ENCODE measurements at regions of chr9 and their contacts with region 1.

Region 1: DNA sequence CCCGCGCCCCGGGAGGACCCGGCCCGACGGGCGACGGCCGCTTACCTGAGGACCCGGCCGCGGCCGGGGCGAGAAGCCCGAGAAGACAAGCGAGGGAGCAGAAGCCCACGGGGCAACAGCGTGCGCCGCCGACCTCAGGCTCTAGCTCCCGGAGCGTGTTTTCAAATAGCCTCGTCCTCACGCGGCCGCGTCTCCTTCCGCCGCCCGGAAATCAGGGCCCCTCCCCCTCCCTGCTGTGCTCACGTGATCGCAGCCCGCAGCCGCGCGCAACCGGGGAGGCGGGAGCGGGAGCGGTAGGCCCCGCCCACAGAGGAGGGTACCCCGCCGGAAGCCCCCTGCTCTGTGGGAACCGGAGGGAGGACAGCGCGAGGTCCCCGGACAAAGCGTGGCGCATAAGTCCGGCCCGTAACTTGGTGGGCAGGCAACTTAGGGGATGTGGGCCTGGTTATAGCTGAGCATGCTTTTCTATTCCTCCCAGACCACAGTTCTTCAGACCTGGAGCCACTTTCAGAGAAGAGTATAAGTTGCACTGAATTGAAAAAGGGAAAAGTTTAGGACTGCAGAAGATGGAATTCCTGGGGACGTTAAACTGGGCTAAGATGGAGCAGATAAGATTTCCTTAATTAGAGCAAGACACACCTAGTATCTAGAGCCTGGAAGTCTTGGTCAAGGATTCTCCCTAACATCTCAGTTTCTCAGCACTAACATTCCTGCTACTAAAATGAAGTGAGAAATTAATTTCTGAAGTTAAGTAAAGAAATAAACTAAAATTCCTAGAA is at the start of gene TEX10:
- DNase-seq: peak; percentile 97
- H3K4me3 Mint-ChIP-seq: peak within 1 kb of the TSS; percentile 88
- H3K27ac Mint-ChIP-seq: peak within 1 kb of the TSS; percentile 56
- H3K4me1 Mint-ChIP-seq: peaks cover 32% of the 10 kb centered on the region
- H3K27me3 Mint-ChIP-seq: no peaks in the 10 kb centered on the region
- total RNA-seq, gene TEX10: 31.3 and 32.8 TPM in 2 replicates

Region 2: GRCh38 chr9:99221621-99222415 is 1131.1 kb before region 1 on chr9 and contains the starts of genes ALG2 and SEC61B:
- intact Hi-C with region 1: loop called (anchors 5 kb)
- DNase-seq: peak; percentile 98
- H3K4me3 Mint-ChIP-seq: peak within 1 kb of the TSS; percentile 97
- H3K27ac Mint-ChIP-seq: peak within 1 kb of the TSS; percentile 99
- H3K4me1 Mint-ChIP-seq: peaks cover 51% of the 10 kb centered on the region
- H3K27me3 Mint-ChIP-seq: no peaks in the 10 kb centered on the region
- total RNA-seq, gene ALG2: 29.2 and 31.0 TPM in 2 replicates
- total RNA-seq, gene SEC61B: 169 and 170 TPM in 2 replicates

Region 3: DNA sequence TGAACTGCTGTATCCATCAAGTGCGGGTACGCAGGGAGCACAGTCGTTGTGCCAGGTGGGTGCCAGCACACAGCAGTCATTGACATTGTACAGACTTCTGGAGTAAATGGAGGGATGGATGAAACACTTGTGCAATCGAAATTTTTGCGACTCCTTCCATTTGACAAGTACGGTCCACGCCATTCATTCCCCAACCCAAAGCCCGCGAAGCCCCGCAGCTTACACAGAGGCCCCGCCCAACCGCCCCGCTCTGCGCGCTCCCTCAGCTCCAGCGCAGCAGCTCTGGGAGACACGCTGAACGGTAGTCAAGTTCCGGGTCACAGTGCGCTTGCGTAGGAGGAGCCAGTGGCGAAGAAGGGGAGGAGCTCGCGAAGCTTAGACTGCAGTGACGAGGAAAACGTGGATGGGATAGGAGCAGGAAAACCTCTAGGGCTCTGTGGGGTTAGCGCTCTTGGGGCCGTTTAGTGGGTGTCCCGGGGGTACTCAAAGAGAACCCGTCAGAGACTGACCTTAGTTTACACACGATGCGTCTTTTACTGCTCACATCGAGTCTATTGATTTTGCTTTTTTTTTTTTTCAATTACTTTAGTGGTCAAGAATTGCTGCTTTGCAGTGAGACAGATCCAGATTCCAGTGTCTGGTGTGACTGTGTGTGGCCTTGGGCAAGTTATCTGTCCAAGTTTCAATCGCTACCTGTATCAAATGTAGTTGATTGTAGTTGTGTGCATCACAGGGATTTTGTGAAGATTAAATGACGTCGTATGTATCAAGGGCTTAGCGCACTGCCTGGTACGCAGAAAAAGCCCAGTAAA is 58.8 kb after region 1 on chr9:
- intact Hi-C with region 1: loop called (anchors 1 kb)
- DNase-seq: peak; percentile 96
- H3K4me3 Mint-ChIP-seq: peak overlapping the region; percentile 86
- H3K27ac Mint-ChIP-seq: peak overlapping the region; percentile 80
- H3K4me1 Mint-ChIP-seq: peaks cover 12% of the 10 kb centered on the region
- H3K27me3 Mint-ChIP-seq: peaks cover 18% of the 10 kb centered on the region

Region 4: DNA sequence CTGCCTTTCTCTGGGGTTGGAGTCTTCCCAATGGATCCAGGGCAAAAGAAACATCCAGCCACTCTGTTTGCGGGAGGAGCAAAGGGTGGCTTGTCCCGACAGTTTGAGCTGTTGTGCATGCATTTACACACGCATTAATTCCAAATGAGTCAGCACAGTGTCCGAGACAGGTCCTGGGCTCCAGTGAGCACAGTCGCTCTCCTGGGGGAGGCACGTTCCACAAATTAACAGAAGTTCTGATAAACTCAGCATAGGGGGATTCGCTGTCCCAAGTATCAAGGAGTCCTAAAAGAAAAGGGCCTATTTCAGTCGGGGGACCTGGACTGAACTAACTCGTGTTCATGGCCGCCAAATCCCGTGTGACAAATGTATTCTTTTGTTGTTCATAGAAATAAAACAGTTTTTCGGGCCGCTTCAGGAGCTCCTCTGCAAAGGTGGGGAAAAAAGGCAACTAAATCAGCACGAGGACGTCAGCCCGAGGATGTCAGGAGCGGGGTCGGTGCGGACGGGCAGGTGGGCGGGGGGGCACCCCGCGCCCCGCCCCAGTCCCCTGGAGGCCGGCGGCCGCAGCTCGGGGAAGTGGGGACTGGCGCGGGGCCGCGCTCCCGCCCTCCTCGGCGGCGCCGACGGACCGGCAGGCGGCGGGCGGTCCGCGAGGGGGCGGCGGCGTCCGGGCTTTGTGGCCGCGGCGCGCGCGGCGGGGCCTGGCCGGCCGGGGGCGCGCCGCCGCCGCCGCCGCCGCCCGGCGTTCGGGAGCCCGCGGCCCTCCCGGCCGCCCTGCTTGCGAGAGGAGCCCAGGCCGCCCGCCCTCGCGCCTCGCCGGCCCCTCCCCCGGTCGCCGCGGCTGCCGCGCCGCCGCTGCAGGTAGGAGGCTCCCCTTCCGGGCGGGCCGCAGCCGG is 73.9 kb after region 1 on chr9 and contains the start of gene MSANTD3:
- intact Hi-C with region 1: loop called (anchors 2 kb)
- DNase-seq: peak; percentile 86
- H3K4me3 Mint-ChIP-seq: peak within 1 kb of the TSS; percentile 85
- H3K27ac Mint-ChIP-seq: peak within 1 kb of the TSS; percentile 95
- H3K4me1 Mint-ChIP-seq: peaks cover 36% of the 10 kb centered on the region
- H3K27me3 Mint-ChIP-seq: peaks cover 17% of the 10 kb centered on the region
- total RNA-seq, gene MSANTD3: 10.0 and 13.9 TPM in 2 replicates

Region 5: GRCh38 chr9:101398068-101398929 is 1045.4 kb after region 1 on chr9 and contains the starts of genes MRPL50 and ZNF189:
- intact Hi-C with region 1: loop called (anchors 2 kb)
- DNase-seq: peak; percentile 98
- H3K4me3 Mint-ChIP-seq: peak within 1 kb of the TSS; percentile 94
- H3K27ac Mint-ChIP-seq: peak within 1 kb of the TSS; percentile 98
- H3K4me1 Mint-ChIP-seq: peaks cover 44% of the 10 kb centered on the region
- H3K27me3 Mint-ChIP-seq: no peaks in the 10 kb centered on the region
- total RNA-seq, gene MRPL50: 18.6 and 19.8 TPM in 2 replicates
- total RNA-seq, gene ZNF189: 11.7 and 12.7 TPM in 2 replicates

Measured in activated CD4-positive, alpha-beta T cell treated with anti-CD3 and anti-CD28 coated beads, Interleukin-2, amount 10 ng/mL, durations not matched to agents 24 days and 14 days (primary cell).